HepG2 (cell line): ENCODE measurements at regions of chr2 and their contacts with region 1.

Region 1: DNA sequence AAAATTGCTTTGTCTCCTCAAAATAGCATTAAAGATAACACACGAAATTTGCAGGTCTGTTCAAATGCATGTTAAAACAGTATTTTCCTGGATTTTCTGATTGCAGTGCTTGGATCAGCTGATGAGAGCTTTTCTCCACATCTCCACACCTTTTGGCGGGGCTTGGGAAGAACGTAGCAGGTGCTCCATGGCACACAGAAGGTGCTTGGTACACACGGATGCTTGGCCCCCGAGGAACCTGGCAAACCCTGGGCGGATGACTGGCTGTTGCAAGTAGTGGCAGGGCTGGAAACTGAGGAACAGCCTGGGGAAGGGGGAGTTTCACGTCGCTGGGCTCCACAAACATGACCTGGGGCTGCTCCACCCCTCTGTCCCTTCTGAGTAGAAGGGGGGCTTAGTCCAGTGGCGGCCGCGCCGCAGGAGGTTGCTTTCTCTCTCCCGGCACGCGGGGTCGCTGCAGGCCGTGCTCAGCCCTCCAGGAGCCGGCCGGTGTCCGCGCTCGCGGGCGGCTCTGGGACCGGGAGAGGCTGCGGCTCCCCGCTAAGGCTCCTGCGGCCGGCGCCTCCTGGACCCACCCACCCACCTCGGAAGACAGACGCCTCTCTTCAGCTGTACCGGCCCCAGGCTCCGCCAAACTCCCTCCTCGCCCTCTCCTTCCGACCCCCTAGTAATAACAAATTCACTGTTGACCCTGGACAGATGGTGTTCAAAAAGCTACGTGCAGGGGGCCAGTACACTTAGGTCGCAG is 69.3 kb downstream of the MARCO start:
- DNase-seq: peak; percentile 33
- ATAC-seq: peak; percentile 99
- H3K4me3 ChIP-seq: peak overlapping the region in 1 of 3 experiments; percentile 33; a peak in 1 of 6 replicates
- H3K27ac ChIP-seq: no peak overlapping the region
- H3K4me1 ChIP-seq: peaks cover 4% of the 10 kb centered on the region; the same call in 1 of the 2 replicates
- H3K27me3 ChIP-seq: peaks cover 0 to 48% of the 10 kb centered on the region in 2 experiments; a peak in 4 of 5 replicates
- CTCF ChIP-seq: peak; percentile 93
- EP300 ChIP-seq: no peak
- POLR2A ChIP-seq: no peak
- RAD21 ChIP-seq: peak; percentile 96

Region 2: DNA sequence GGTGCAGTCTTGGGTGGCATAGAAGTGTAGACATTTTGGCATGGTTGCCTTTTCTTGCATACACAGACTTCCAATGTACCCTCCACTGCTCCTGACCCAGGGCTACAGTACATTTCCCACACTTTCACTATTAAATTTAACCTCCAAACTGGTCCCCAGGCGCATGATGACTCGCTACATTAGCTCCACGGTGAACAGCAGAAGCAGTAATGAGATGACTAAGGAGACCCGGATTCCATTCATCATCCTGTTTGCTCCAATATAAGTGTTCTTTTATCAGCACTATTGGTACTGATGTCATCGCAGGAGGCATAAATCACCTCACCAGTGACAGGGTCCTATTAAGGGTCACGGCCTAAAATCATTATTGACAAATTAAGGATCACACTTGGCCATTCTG is 480.4 kb before region 1 on chr2:
- CTCF ChIA-PET with region 1: no interaction called
- POLR2A ChIA-PET with region 1: no interaction called
- in situ Hi-C with region 1: no loop called
- intact Hi-C with region 1: no loop called
- DNase-seq: no peak
- ATAC-seq: no peak
- H3K4me3 ChIP-seq: no peak overlapping the region
- H3K27ac ChIP-seq: no peak overlapping the region
- H3K4me1 ChIP-seq: no peaks in the 10 kb centered on the region
- H3K27me3 ChIP-seq: no peaks in the 10 kb centered on the region
- CTCF ChIP-seq: no peak
- EP300 ChIP-seq: no peak
- POLR2A ChIP-seq: no peak
- RAD21 ChIP-seq: no peak

Region 3: DNA sequence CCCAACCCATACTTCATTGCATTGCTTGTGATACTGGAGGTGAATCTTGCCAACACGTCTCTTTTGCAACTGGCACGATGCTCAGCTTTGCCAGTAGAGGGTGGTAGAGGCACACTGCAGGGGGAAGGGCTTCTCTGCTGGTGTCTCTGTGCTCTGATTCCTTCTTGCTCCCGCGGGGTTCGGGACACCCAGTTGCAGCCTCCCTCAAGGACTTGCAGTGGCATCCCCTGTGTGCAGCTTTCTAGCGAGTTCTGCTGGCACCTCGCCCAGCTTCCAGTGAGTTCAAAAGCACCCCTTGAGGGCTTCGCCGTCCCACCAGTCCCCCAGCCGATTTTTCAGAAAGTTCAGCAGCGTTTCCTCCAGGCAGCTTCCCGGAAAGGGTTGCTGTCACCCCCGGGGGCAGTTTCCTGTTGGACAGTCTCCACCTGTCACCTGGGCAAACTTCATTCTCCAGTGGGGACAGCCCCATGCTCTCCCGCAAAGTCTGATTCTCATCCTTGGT is 128.6 kb before region 1 on chr2:
- CTCF ChIA-PET with region 1: no interaction called
- POLR2A ChIA-PET with region 1: no interaction called
- in situ Hi-C with region 1: no loop called
- intact Hi-C with region 1: loop called (anchors 1 kb)
- DNase-seq: peak; percentile 59
- ATAC-seq: peak; percentile 90
- H3K4me3 ChIP-seq: peak overlapping the region in 2 of 3 experiments; percentile 17 to 53; a peak in 1 of 6 replicates
- H3K27ac ChIP-seq: no peak overlapping the region
- H3K4me1 ChIP-seq: 0 out of 2 replicates have a peak, but pooled peaks cover 4% of the 10 kb centered on the region
- H3K27me3 ChIP-seq: no peaks in the 10 kb centered on the region
- CTCF ChIP-seq: peak; percentile 91
- EP300 ChIP-seq: no peak
- POLR2A ChIP-seq: no peak
- RAD21 ChIP-seq: peak; percentile 47; the same call in 1 of the 2 replicates

Region 4: DNA sequence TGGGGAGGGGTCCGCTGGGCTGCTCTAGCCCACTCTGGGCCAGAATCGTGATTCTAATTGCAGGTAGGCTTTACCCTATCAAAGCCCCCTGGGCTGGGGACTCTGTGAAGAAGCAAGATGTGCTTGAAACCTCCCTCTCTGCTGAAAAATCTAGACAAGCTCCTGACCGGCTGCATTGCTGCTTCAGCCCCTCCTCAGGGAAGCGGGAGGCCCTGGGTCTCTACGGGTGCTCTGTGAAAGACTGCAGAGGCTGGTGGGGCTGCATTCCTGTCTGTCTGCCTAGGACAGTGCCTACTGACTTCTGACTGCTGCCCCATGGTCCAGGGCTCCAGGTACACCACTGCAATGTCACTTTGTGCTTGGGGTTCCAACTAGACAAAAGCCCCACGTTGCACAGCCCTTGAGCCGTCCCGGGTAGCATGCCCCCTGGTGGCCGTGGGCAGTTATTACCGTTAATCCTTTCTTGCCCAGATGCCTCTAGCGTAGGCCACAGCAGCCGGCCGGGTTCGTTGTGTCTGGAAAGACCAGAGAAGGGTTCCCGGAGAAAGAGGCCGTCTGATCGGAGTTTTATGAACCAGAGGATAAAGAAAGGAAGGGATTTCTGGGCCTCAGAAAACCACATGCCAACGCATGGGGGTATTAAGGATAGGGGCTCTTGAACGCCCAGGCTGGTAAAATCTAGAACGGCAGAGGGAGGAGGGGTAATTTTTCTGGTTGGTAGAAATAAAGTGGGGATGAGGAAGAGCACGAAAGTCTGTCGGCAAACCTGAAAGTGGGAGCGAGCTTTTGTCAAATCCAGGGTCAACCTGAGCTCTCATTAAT is 163.1 kb after region 1 on chr2:
- CTCF ChIA-PET with region 1: interaction called, 23 read pairs
- POLR2A ChIA-PET with region 1: no interaction called
- in situ Hi-C with region 1: loop called (anchors 5 kb)
- intact Hi-C with region 1: loop called (anchors 1 kb)
- DNase-seq: peak; percentile 37
- ATAC-seq: peak; percentile 93
- H3K4me3 ChIP-seq: no peak overlapping the region
- H3K27ac ChIP-seq: no peak overlapping the region
- H3K4me1 ChIP-seq: no peaks in the 10 kb centered on the region
- H3K27me3 ChIP-seq: peaks cover 0 to 23% of the 10 kb centered on the region in 2 experiments; a peak in 1 of 5 replicates
- CTCF ChIP-seq: peak; percentile 89
- EP300 ChIP-seq: no peak
- POLR2A ChIP-seq: no peak
- RAD21 ChIP-seq: peak; percentile 68

Region 5: GRCh38 chr2:119264781-119265692 is 253.7 kb after region 1 on chr2:
- CTCF ChIA-PET with region 1: interaction called, 5 read pairs
- POLR2A ChIA-PET with region 1: no interaction called
- in situ Hi-C with region 1: no loop called
- intact Hi-C with region 1: loop called (anchors 5 kb)
- DNase-seq: peak; percentile 51
- ATAC-seq: peak; percentile 98
- H3K4me3 ChIP-seq: no peak overlapping the region
- H3K27ac ChIP-seq: no peak overlapping the region
- H3K4me1 ChIP-seq: peaks cover 10% of the 10 kb centered on the region
- H3K27me3 ChIP-seq: no peaks in the 10 kb centered on the region
- CTCF ChIP-seq: peak; percentile 96
- EP300 ChIP-seq: no peak
- POLR2A ChIP-seq: no peak
- RAD21 ChIP-seq: peak; percentile 83

Region 6: DNA sequence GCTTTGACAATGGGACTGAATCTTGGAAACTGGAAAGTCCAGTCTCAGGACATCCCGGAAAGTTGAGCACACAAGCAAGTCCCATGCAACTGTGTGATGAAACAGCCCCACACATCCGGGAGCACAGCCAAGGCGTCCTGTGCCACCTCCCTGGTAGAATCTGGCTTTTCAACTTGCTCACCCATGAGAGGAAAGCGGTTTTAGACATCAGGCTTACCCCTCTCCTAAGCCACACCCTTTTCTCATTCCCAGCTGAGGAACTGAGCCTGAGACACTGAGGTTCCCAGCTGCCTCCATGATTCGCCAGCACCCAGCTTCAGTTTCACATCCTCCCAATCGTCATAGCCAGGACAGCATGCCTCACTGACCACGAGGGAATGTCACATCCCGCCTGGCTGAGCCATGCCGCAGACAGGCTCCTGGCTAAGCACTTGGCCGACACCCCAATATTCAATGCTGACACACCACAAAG is 272.6 kb after region 1 on chr2:
- CTCF ChIA-PET with region 1: no interaction called
- POLR2A ChIA-PET with region 1: no interaction called
- in situ Hi-C with region 1: loop called (anchors 10 kb)
- intact Hi-C with region 1: no loop called
- DNase-seq: no peak
- ATAC-seq: no peak
- H3K4me3 ChIP-seq: no peak overlapping the region
- H3K27ac ChIP-seq: no peak overlapping the region
- H3K4me1 ChIP-seq: no peaks in the 10 kb centered on the region
- H3K27me3 ChIP-seq: peaks cover 0 to 21% of the 10 kb centered on the region in 2 experiments; a peak in 4 of 5 replicates
- CTCF ChIP-seq: no peak
- EP300 ChIP-seq: no peak
- POLR2A ChIP-seq: no peak
- RAD21 ChIP-seq: no peak

Region 7: GRCh38 chr2:119290859-119291587 is 279.7 kb after region 1 on chr2:
- CTCF ChIA-PET with region 1: interaction called, 15 read pairs
- POLR2A ChIA-PET with region 1: no interaction called
- in situ Hi-C with region 1: loop called (anchors 10 kb)
- intact Hi-C with region 1: loop called (anchors 1 kb)
- DNase-seq: peak; percentile 75
- ATAC-seq: peak; percentile 97
- H3K4me3 ChIP-seq: peak overlapping the region in 1 of 3 experiments; percentile 2; a peak in 1 of 6 replicates
- H3K27ac ChIP-seq: no peak overlapping the region
- H3K4me1 ChIP-seq: peaks cover 27% of the 10 kb centered on the region
- H3K27me3 ChIP-seq: no peaks in the 10 kb centered on the region; a peak in 2 of 5 replicates
- CTCF ChIP-seq: peak; percentile 99
- EP300 ChIP-seq: no peak
- POLR2A ChIP-seq: no peak
- RAD21 ChIP-seq: peak; percentile 84

Region 8: GRCh38 chr2:119311356-119311755 is 300.0 kb after region 1 on chr2:
- CTCF ChIA-PET with region 1: interaction called, 5 read pairs
- POLR2A ChIA-PET with region 1: no interaction called
- in situ Hi-C with region 1: no loop called
- intact Hi-C with region 1: loop called (anchors 1 kb)
- DNase-seq: no peak
- ATAC-seq: peak; percentile 76
- H3K4me3 ChIP-seq: no peak overlapping the region
- H3K27ac ChIP-seq: no peak overlapping the region
- H3K4me1 ChIP-seq: peaks cover 23% of the 10 kb centered on the region
- H3K27me3 ChIP-seq: no peaks in the 10 kb centered on the region
- CTCF ChIP-seq: peak; percentile 50
- EP300 ChIP-seq: no peak
- POLR2A ChIP-seq: no peak
- RAD21 ChIP-seq: no peak